Head of caudate nucleus (tissue), 42 donors: ENCODE measurements at regions of chr3 and their contacts with region 1.

Region 1: GRCh38 chr3:196739671-196740480 is at the start of gene PAK2:
- DNase-seq: peak; percentile 90 to 98 (median 96)

Region 2: DNA sequence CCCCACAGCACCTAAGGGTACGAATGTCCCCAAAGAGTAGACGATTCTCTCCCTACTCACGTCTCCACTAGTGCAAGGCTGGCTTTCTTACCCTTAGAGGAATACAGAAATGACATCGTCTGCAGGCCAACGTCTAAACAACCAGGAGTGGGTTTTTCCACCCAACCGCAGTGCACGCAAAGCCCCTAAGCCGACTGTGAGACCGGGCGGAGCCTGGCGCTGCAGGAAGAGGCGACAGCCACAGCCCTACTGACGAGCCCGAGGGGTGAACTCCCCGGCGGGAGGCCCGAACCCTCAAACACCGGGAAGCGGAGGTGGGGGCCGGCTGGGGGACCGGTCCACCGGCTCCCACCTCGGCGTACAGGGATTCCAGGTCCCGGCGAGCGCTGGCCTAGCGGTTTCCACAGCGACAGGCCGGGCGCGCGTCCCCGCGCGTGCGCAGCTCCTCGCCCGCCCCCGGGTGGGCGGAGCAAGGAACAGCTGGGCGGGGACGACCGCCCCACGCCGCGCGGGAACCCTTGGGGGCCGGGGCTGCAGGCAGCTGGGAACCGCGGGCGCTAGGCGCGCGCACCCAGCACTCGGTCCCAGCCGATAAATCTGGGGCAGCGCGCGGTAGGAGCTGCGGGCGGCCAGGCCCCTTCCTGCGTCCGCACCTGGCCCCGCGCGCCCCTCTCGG is 27.9 kb before region 1 on chr3 and contains the starts of genes CEP19 and PIGX:
- intact Hi-C with region 1: loop called (anchors 1 kb)
- DNase-seq: peak; percentile 73 to 96 (median 90)

Region 3: GRCh38 chr3:196835086-196835485 is 95.2 kb after region 1 on chr3:
- intact Hi-C with region 1: no loop called
- DNase-seq: no peak

Region 4: GRCh38 chr3:196942226-196942914 is 202.5 kb after region 1 on chr3 and contains the start of gene NCBP2:
- intact Hi-C with region 1: loop called (anchors 5 kb)
- DNase-seq: peak; percentile 90 to 99 (median 97)

Region 5: GRCh38 chr3:197394464-197395321 is 654.8 kb after region 1 on chr3:
- intact Hi-C with region 1: no loop called
- DNase-seq: peak in 38 of 42 donors; percentile 27 to 90 (median 59)